ENCODE measurements at regions of chr14 and their contacts with region 1.

Region 1: GRCh38 chr14:20343092-20343861 is at the start of gene PARP2:
- DNase-seq: peak; percentile 70 to 97 (median 84)
- ATAC-seq: peak; percentile 81
- H3K4me3 ChIP-seq: peak within 1 kb of the TSS; percentile 96 to 98
- H3K4me3 Mint-ChIP-seq: peak within 1 kb of the TSS; percentile 100
- H3K27ac ChIP-seq: peak within 1 kb of the TSS; percentile 79 to 93
- H3K27ac Mint-ChIP-seq: peak within 1 kb of the TSS; percentile 97
- H3K4me1 ChIP-seq: peaks cover 8% of the 10 kb centered on the region
- H3K4me1 Mint-ChIP-seq: peaks cover 18% of the 10 kb centered on the region
- H3K27me3 ChIP-seq: peaks cover 0 to 3% of the 10 kb centered on the region in 2 experiments
- H3K27me3 Mint-ChIP-seq: no peaks in the 10 kb centered on the region
- CTCF ChIP-seq: peak; percentile 14
- total RNA-seq, gene PARP2: 15.9 to 16.5 TPM

Region 2: GRCh38 chr14:20332788-20333493 is 10.3 kb before region 1 on chr14 and contains the start of gene CCNB1IP1:
- CTCF ChIA-PET with region 1: interaction called, 102 read pairs
- POLR2A ChIA-PET with region 1: interaction called, 23 read pairs
- intact Hi-C with region 1: loop called (anchors 1 kb)
- DNase-seq: peak in 8 of 9 experiments; percentile 20 to 91 (median 50)
- ATAC-seq: peak; percentile 98
- H3K4me3 ChIP-seq: peak within 1 kb of the TSS; percentile 56 to 72
- H3K4me3 Mint-ChIP-seq: peak within 1 kb of the TSS; percentile 93
- H3K27ac ChIP-seq: peak within 1 kb of the TSS; percentile 49 to 73
- H3K27ac Mint-ChIP-seq: peak within 1 kb of the TSS; percentile 88
- H3K4me1 ChIP-seq: peaks cover 7% of the 10 kb centered on the region
- H3K4me1 Mint-ChIP-seq: peaks cover 30% of the 10 kb centered on the region
- H3K27me3 ChIP-seq: no peaks in the 10 kb centered on the region
- H3K27me3 Mint-ChIP-seq: no peaks in the 10 kb centered on the region
- CTCF ChIP-seq: no peak
- total RNA-seq, gene CCNB1IP1: 26.9 to 28.0 TPM

Region 3: DNA sequence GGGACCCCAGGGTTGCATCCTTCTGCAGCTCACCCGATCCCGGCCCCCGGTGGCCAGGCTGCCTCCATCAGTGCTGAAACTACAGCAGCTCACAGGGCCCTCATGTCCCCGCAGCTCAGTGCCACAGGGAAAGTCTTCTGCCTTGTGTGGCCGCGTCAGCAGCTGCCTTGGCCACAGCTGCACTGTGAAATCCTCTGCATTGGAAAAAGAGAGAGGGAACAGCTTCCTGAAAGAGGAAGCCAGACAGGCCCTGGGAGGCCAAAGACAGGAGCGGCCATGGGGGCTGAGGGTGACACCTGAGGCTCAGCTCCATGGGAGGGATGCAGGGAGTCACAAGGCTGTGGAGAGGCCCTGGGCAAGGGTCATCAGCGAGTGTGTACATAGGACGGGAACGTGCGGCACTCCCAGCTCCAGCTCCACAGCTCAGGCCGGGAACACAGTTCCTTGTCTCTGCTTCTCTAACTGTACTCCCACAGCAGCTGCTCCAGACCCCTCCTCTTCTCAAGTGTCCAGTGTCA is 32.9 kb after region 1 on chr14:
- CTCF ChIA-PET with region 1: no interaction called
- POLR2A ChIA-PET with region 1: no interaction called
- intact Hi-C with region 1: no loop called
- DNase-seq: no peak
- ATAC-seq: no peak
- H3K4me3 ChIP-seq: no peak overlapping the region
- H3K4me3 Mint-ChIP-seq: no peak overlapping the region
- H3K27ac ChIP-seq: no peak overlapping the region
- H3K27ac Mint-ChIP-seq: no peak overlapping the region
- H3K4me1 ChIP-seq: no peaks in the 10 kb centered on the region
- H3K4me1 Mint-ChIP-seq: no peaks in the 10 kb centered on the region
- H3K27me3 ChIP-seq: no peaks in the 10 kb centered on the region
- H3K27me3 Mint-ChIP-seq: no peaks in the 10 kb centered on the region
- CTCF ChIP-seq: no peak

Region 4: DNA sequence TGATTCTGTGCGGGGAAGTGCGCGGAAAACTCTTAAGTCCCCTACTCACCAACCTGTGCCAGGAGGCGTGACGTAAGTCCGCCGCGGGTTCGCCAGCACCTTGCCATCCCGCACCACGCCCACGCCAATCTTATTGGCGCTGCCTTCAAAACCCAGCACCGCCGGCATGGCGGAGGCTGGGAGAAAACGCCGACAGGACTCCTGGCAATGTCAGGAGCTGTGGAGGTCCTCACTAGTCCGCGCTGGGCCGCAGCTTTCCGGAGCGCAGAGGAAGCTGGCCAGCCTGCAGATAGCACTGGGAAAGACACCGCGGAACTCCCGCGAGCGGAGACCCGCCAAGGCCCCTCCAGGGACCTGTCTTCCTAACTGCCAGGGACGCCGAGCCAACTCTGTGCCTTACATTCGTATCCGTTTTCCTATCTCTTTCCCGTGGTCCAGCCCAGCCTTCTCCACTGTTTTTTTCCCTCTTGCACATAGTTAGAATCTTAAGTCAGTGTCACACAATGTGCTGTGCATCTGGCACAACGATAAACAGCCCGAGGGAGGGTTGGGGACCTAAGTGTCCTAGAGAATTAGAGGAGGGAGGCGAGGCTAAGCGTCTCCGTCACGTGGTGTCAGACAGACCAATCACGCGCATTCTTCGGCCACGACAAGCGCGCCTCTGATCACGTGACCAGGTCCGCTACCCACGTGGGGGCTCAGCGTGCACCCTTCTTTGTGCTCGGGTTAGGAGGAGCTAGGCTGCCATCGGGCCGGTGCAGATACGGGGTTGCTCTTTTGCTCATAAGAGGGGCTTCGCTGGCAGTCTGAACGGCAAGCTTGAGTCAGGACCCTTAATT is 111.5 kb after region 1 on chr14 and contains the starts of genes APEX1 and OSGEP:
- CTCF ChIA-PET with region 1: no interaction called
- POLR2A ChIA-PET with region 1: interaction called, 6 read pairs
- intact Hi-C with region 1: loop called (anchors 1 kb)
- DNase-seq: peak; percentile 96 to 100 (median 97)
- ATAC-seq: peak; percentile 80
- H3K4me3 ChIP-seq: peak within 1 kb of the TSS; percentile 73 to 82
- H3K4me3 Mint-ChIP-seq: no peak within 1 kb of the TSS
- H3K27ac ChIP-seq: peak within 1 kb of the TSS; percentile 89 to 96
- H3K27ac Mint-ChIP-seq: no peak within 1 kb of the TSS
- H3K4me1 ChIP-seq: peaks cover 32% of the 10 kb centered on the region
- H3K4me1 Mint-ChIP-seq: peaks cover 22% of the 10 kb centered on the region
- H3K27me3 ChIP-seq: no peaks in the 10 kb centered on the region
- H3K27me3 Mint-ChIP-seq: no peaks in the 10 kb centered on the region
- CTCF ChIP-seq: no peak
- total RNA-seq, gene APEX1: 120 to 123 TPM
- total RNA-seq, gene OSGEP: 40.7 to 47.4 TPM

Region 5: GRCh38 chr14:20632682-20633428 is 289.6 kb after region 1 on chr14:
- CTCF ChIA-PET with region 1: interaction called, 5 read pairs
- POLR2A ChIA-PET with region 1: interaction called, 3 read pairs
- intact Hi-C with region 1: loop called in 1 of 2 experiments (anchors 5 kb)
- DNase-seq: peak in 7 of 9 experiments; percentile 19 to 83 (median 55)
- ATAC-seq: peak; percentile 65
- H3K4me3 ChIP-seq: peak overlapping the region; percentile 55 to 65
- H3K4me3 Mint-ChIP-seq: peak overlapping the region; percentile 90
- H3K27ac ChIP-seq: peak overlapping the region in 1 of 2 experiments; percentile 43
- H3K27ac Mint-ChIP-seq: peak overlapping the region; percentile 84
- H3K4me1 ChIP-seq: peaks cover 18% of the 10 kb centered on the region
- H3K4me1 Mint-ChIP-seq: peaks cover 52% of the 10 kb centered on the region
- H3K27me3 ChIP-seq: no peaks in the 10 kb centered on the region
- H3K27me3 Mint-ChIP-seq: peaks cover 9% of the 10 kb centered on the region
- CTCF ChIP-seq: no peak

Region 6: DNA sequence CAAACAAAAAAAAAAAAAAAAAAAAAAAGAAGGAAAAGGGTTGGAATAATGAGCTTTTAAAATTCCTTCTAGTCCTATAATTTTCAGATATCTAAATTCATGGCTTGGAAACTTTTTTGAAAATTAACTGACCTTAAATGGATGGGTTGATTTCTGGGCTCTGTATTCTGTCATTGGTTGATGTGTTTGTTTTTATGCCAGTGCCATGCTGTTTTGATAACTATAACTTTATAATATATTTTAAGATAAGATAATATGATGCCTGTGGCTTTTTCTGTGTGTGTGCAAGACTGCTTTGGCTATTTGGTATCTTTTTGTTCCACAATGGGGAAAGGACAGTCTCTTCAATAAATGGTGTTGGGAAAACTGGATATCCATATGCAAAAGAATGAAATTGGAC is 1229.3 kb after region 1 on chr14:
- CTCF ChIA-PET with region 1: no interaction called
- POLR2A ChIA-PET with region 1: no interaction called
- intact Hi-C with region 1: no loop called
- DNase-seq: no peak
- ATAC-seq: no peak
- H3K4me3 ChIP-seq: no peak overlapping the region
- H3K4me3 Mint-ChIP-seq: no peak overlapping the region
- H3K27ac ChIP-seq: no peak overlapping the region
- H3K27ac Mint-ChIP-seq: no peak overlapping the region
- H3K4me1 ChIP-seq: no peaks in the 10 kb centered on the region
- H3K4me1 Mint-ChIP-seq: no peaks in the 10 kb centered on the region
- H3K27me3 ChIP-seq: peaks cover 0 to 2% of the 10 kb centered on the region in 2 experiments
- H3K27me3 Mint-ChIP-seq: peaks cover 25% of the 10 kb centered on the region
- CTCF ChIP-seq: no peak